ENCODE measurements at regions of chr5 and their contacts with region 1.

Region 1: DNA sequence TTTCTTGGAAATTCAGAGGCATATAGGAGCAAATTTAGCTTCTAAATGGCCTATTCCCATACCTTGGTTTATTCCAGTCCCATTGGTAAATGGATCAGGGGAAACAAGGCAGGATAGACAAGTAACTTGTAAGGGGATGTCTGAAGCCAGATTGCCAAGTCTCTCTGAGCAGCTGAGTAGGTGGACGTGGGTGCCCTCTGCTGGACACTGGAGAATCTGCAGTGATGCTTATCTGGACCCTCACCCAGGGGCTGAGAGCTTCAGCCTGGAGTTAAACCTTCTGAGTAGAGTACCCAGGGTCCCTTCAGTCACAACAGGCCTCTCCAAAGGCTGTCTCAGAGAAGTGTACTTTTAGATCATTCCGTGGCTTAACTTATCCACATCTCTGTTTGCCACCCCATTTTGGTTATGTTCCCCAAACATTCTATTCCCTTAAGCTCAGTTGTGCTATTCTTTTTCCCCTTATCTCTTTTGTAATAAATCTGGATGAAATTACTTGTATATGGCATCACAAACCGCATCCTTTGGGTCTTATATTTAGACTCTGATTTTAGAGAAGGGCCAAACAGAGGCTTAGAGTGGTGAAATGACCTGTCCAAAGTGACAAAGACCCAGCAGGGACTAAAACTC is 218.3 kb upstream of the GLRA1 start:
- DNase-seq: peak; percentile 52 to 57 (median 57)
- H3K4me3 ChIP-seq: no peak overlapping the region
- H3K4me3 Mint-ChIP-seq: no peak overlapping the region
- H3K27ac ChIP-seq: no peak overlapping the region
- H3K27ac Mint-ChIP-seq: no peak overlapping the region
- H3K4me1 ChIP-seq: peaks cover 4% of the 10 kb centered on the region
- H3K4me1 Mint-ChIP-seq: peaks cover 0 to 1% (median 0%) of the 10 kb centered on the region in 4 donors
- H3K27me3 ChIP-seq: no peaks in the 10 kb centered on the region
- H3K27me3 Mint-ChIP-seq: peaks cover 0 to 1% of the 10 kb centered on the region in 2 donors

Region 2: GRCh38 chr5:151758430-151759241 is 384.3 kb before region 1 on chr5 and contains the start of gene ATOX1:
- CTCF ChIA-PET with region 1: no interaction called
- POLR2A ChIA-PET with region 1: no interaction called
- intact Hi-C with region 1: loop called (anchors 10 kb)
- DNase-seq: peak; percentile 88 to 90 (median 90)
- H3K4me3 ChIP-seq: peak within 1 kb of the TSS; percentile 90 to 93
- H3K4me3 Mint-ChIP-seq: peak within 1 kb of the TSS; percentile 86 to 99 (median 91)
- H3K27ac ChIP-seq: peak within 1 kb of the TSS; percentile 85
- H3K27ac Mint-ChIP-seq: peak within 1 kb of the TSS; percentile 77 to 97 (median 95)
- H3K4me1 ChIP-seq: peaks cover 38% of the 10 kb centered on the region
- H3K4me1 Mint-ChIP-seq: peaks cover 25 to 55% (median 34%) of the 10 kb centered on the region in 4 donors
- H3K27me3 ChIP-seq: no peaks in the 10 kb centered on the region
- H3K27me3 Mint-ChIP-seq: no peaks in the 10 kb centered on the region
- total RNA-seq, gene ATOX1: 28.2 to 31.0 TPM

Region 3: GRCh38 chr5:151868451-151868850 is 274.5 kb before region 1 on chr5:
- CTCF ChIA-PET with region 1: interaction called, 11 read pairs
- POLR2A ChIA-PET with region 1: no interaction called
- intact Hi-C with region 1: no loop called
- DNase-seq: peak; percentile 56 to 71 (median 66)
- H3K4me3 ChIP-seq: no peak overlapping the region
- H3K4me3 Mint-ChIP-seq: no peak overlapping the region
- H3K27ac ChIP-seq: no peak overlapping the region
- H3K27ac Mint-ChIP-seq: peak overlapping the region in 6 of 7 donors; percentile 15 to 85 (median 64)
- H3K4me1 ChIP-seq: no peaks in the 10 kb centered on the region
- H3K4me1 Mint-ChIP-seq: peaks cover 4 to 11% (median 8%) of the 10 kb centered on the region in 4 donors
- H3K27me3 ChIP-seq: no peaks in the 10 kb centered on the region
- H3K27me3 Mint-ChIP-seq: no peaks in the 10 kb centered on the region

Region 4: GRCh38 chr5:152164860-152165259 is 21.9 kb after region 1 on chr5:
- CTCF ChIA-PET with region 1: interaction called, 23 read pairs
- POLR2A ChIA-PET with region 1: interaction called, 3 read pairs
- intact Hi-C with region 1: no loop called
- DNase-seq: no peak
- H3K4me3 ChIP-seq: no peak overlapping the region
- H3K4me3 Mint-ChIP-seq: no peak overlapping the region
- H3K27ac ChIP-seq: no peak overlapping the region
- H3K27ac Mint-ChIP-seq: no peak overlapping the region
- H3K4me1 ChIP-seq: peaks cover 8% of the 10 kb centered on the region
- H3K4me1 Mint-ChIP-seq: peaks cover 9 to 31% (median 18%) of the 10 kb centered on the region in 4 donors
- H3K27me3 ChIP-seq: no peaks in the 10 kb centered on the region
- H3K27me3 Mint-ChIP-seq: no peaks in the 10 kb centered on the region

Region 5: GRCh38 chr5:152505442-152506042 is 362.6 kb after region 1 on chr5:
- CTCF ChIA-PET with region 1: interaction called, 5 read pairs
- POLR2A ChIA-PET with region 1: no interaction called
- intact Hi-C with region 1: loop called (anchors 1 kb)
- DNase-seq: peak in 4 of 5 donors; percentile 29 to 36 (median 34)
- H3K4me3 ChIP-seq: no peak overlapping the region
- H3K4me3 Mint-ChIP-seq: no peak overlapping the region
- H3K27ac ChIP-seq: no peak overlapping the region
- H3K27ac Mint-ChIP-seq: no peak overlapping the region
- H3K4me1 ChIP-seq: no peaks in the 10 kb centered on the region
- H3K4me1 Mint-ChIP-seq: peaks cover 0 to 4% (median 3%) of the 10 kb centered on the region in 4 donors
- H3K27me3 ChIP-seq: peaks cover 5% of the 10 kb centered on the region
- H3K27me3 Mint-ChIP-seq: peaks cover 8 to 15% of the 10 kb centered on the region in 2 donors

Measured in CD4-positive, alpha-beta memory T cell (primary cell).